Heart left ventricle (tissue), 16 donors: ENCODE measurements at regions of chr21 and their contacts with region 1.

Region 1: DNA sequence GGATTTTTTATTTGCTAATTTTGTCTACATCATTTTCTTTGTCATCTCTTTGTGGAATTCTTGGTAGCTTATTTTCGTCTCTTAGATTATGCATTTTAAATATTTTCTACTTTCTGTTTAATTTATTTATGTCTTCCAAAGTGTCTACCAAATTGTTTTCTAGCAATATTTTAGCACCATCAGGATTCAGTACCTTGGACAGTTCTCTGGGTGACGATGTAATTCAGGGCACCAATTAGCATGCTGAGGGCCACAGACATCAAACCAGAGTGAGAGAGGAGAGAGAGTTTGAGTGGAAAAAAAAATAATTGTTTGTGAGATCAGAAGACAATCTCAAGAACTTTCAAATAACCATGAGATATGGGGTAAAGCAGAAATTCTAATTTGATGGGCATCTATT is 169.8 kb upstream of the CXADR start:
- DNase-seq: no peak
- ATAC-seq: no peak
- H3K4me3 ChIP-seq: no peak overlapping the region
- H3K27ac ChIP-seq: no peak overlapping the region
- H3K4me1 ChIP-seq: no peaks in the 10 kb centered on the region
- H3K27me3 ChIP-seq: no peaks in the 10 kb centered on the region
- CTCF ChIP-seq: no peak
- POLR2A ChIP-seq: no peak

Region 2: DNA sequence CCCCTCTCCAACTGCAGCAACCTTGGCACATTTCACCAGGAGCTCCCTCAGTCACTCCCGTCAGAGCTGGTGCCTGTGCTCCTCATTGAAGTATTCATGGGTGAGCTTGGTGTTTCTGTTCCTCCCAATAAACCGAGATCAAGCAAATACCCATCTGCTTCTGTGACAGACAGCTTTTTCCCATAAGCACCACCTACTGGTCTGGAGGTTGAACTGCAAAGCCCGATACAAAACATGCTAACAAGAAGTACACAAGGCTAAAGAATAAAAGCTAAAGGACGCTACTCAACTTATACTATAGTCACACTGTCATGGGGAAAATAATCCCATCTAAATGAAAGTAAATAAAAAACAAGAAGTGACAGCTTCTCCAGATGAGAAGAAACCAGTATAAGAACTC is 588.0 kb after region 1 on chr21:
- intact Hi-C with region 1: loop called in 1 of 10 experiments (anchors 10 kb)
- DNase-seq: no peak
- ATAC-seq: no peak
- H3K4me3 ChIP-seq: no peak overlapping the region
- H3K27ac ChIP-seq: no peak overlapping the region
- H3K4me1 ChIP-seq: no peaks in the 10 kb centered on the region
- H3K27me3 ChIP-seq: no peaks in the 10 kb centered on the region
- CTCF ChIP-seq: no peak
- POLR2A ChIP-seq: no peak